ENCODE measurements at regions of chr11 and their contacts with region 1.

Region 1: DNA sequence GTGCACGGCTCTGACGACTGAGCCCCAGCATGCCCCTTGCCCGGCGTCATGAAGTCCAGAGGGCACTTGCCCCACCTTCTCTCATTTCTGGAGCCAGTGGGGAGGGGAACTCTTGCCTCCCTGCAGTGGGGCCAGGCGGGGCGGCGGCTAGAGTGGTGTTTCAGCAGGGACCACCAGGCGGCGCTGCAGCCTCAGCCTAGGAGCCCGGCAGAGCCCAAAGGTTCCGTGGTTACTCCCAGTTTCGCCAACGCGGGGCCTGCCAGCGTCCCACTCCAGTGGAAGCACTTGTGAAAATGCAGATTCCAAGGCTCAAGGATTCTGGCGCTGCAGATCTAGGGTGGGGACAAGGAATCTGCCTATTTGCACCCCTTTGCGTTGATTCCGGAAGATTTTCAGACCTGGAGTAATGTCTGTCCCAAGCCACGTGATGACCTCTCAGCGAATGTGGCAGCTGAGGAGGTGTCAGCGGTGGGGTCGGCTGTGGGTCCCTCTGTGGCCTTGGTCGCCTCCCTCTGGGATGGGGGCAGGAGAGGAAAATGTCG is 55.7 kb downstream of the CD82 start:
- DNase-seq: peak; percentile 91
- ATAC-seq: peak; percentile 75
- H3K4me3 Mint-ChIP-seq: peak overlapping the region; percentile 65
- H3K27ac Mint-ChIP-seq: no peak overlapping the region
- H3K4me1 Mint-ChIP-seq: peaks cover 35% of the 10 kb centered on the region; the same call in 1 of the 2 replicates
- H3K27me3 Mint-ChIP-seq: peaks cover 16% of the 10 kb centered on the region
- CTCF ChIP-seq: peak; percentile 99

Region 2: GRCh38 chr11:44286268-44286880 is 334.8 kb before region 1 on chr11:
- CTCF ChIA-PET with region 1: interaction called, 13 read pairs
- POLR2A ChIA-PET with region 1: no interaction called
- DNase-seq: peak; percentile 83
- ATAC-seq: peak; percentile 89
- H3K4me3 Mint-ChIP-seq: no peak overlapping the region
- H3K27ac Mint-ChIP-seq: no peak overlapping the region
- H3K4me1 Mint-ChIP-seq: peaks cover 5% of the 10 kb centered on the region; the same call in 1 of the 2 replicates
- H3K27me3 Mint-ChIP-seq: no peaks in the 10 kb centered on the region
- CTCF ChIP-seq: peak; percentile 92

Region 3: GRCh38 chr11:44565211-44565952 is 55.8 kb before region 1 on chr11 and contains the start of gene CD82:
- CTCF ChIA-PET with region 1: interaction called, 250 read pairs
- POLR2A ChIA-PET with region 1: no interaction called
- DNase-seq: peak; percentile 100
- ATAC-seq: peak; percentile 98
- H3K4me3 Mint-ChIP-seq: peak within 1 kb of the TSS; percentile 67
- H3K27ac Mint-ChIP-seq: 0 out of 2 replicates have a peak within 1 kb of the TSS, but pooled peaks have one; percentile 63
- H3K4me1 Mint-ChIP-seq: peaks cover 51% of the 10 kb centered on the region
- H3K27me3 Mint-ChIP-seq: peaks cover 48% of the 10 kb centered on the region
- CTCF ChIP-seq: no peak
- total RNA-seq, gene CD82: 15.5 to 19.8 TPM (median 19.3 TPM) in 3 replicates

Region 4: DNA sequence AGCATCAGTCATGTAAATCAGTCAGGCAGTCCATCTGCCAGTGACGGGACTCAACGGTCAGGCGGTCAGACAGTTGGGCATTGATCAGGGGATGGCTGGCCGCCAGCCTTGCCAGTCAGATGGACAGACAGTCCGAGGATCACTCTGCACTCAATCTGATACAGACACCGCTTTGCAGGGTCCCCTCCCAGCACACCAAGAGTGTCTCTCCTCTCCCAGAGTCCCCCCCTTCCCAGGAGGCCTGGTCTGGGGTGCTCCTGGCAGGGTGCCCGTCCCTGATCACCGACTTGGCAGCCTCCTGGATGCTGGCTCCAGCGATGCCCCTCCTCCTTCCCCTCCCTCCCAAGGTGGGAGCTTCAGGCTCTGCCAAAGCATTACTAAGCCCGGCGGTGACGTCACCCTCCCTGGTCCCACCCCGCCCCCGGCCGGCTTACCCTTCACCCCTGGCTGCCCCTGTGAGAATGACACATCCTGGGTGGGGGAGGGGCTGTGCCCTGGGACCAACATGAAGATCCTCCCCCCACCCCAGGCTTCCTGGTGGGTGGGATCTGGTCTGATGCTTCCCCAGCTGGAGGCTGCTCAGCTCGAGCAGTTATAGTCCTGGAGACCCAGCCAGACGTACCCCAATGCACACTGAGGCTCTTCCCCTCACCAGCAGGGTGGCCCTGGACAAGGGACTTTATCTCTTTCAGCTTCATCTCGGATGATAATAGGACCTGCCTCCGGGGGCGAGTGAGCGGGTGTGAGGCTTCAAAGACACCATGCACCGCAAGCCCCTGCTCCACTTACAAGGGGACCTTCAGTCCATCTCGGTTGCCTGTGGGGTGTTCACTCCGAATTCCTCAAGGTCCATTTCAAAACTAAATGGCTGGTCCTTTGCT is 13.4 kb after region 1 on chr11:
- CTCF ChIA-PET with region 1: interaction called, 16 read pairs
- POLR2A ChIA-PET with region 1: no interaction called
- DNase-seq: peak; percentile 80
- ATAC-seq: peak; percentile 79
- H3K4me3 Mint-ChIP-seq: no peak overlapping the region
- H3K27ac Mint-ChIP-seq: no peak overlapping the region
- H3K4me1 Mint-ChIP-seq: peaks cover 29% of the 10 kb centered on the region
- H3K27me3 Mint-ChIP-seq: no peaks in the 10 kb centered on the region; the same call in 1 of the 2 replicates
- CTCF ChIP-seq: no peak

Region 5: GRCh38 chr11:44760917-44761550 is 139.8 kb after region 1 on chr11:
- CTCF ChIA-PET with region 1: interaction called, 22 read pairs
- POLR2A ChIA-PET with region 1: interaction called, 3 read pairs
- DNase-seq: peak; percentile 66
- ATAC-seq: peak; percentile 94
- H3K4me3 Mint-ChIP-seq: no peak overlapping the region
- H3K27ac Mint-ChIP-seq: 0 out of 2 replicates have a peak overlapping the region, but pooled peaks have one; percentile 3
- H3K4me1 Mint-ChIP-seq: peaks cover 48% of the 10 kb centered on the region
- H3K27me3 Mint-ChIP-seq: peaks cover 17% of the 10 kb centered on the region
- CTCF ChIP-seq: peak; percentile 57

Region 6: DNA sequence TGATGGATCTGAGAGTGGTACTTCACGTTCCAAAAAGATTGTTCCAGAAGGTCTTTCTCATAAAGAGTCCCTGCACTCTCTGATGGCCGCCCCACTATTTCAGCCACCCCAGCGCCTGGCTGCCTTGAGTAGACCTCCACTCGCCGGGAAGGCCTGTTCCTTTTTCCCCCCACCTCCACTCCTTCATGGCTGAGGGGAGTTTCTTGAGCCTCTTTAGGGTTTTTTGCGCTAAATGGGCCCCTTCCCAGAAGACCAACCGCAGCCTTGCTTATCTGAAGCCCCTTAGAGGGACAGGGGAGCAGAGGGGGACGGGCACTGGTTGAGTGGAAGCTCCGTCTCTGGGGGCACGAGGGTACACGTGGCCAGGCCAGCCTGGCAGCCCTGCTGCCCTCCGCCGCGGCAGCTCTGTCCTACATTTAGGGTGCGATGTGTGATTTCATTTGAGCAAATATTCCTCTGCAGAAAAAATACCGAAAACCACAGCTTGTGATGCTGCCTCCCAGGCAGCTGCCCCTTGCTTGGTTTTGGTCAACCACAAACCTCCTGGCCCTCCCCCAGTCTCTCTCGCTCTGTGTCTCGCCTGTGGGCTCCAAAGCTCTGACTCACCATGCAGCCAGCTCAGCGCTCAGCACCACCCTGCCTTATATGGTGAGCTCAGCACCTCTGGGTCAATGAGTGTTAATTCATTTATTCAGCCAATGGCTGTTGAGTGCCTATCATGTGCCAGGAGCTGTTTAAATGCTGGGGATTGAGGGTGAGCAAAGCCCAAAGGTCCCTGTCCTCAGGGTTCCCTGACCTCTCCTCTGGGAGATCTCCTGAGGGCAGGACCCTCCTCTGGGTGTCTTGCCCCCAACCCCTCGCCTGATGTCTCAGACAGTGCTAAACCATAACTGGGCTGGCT is 240.9 kb after region 1 on chr11:
- CTCF ChIA-PET with region 1: interaction called, 10 read pairs
- POLR2A ChIA-PET with region 1: no interaction called
- DNase-seq: peak; percentile 52
- ATAC-seq: peak; percentile 84
- H3K4me3 Mint-ChIP-seq: no peak overlapping the region
- H3K27ac Mint-ChIP-seq: peak overlapping the region; percentile 17
- H3K4me1 Mint-ChIP-seq: peaks cover 75% of the 10 kb centered on the region
- H3K27me3 Mint-ChIP-seq: no peaks in the 10 kb centered on the region
- CTCF ChIP-seq: no peak